B cell (primary cell): ENCODE measurements at regions of chr16 and their contacts with region 1.

Region 1: DNA sequence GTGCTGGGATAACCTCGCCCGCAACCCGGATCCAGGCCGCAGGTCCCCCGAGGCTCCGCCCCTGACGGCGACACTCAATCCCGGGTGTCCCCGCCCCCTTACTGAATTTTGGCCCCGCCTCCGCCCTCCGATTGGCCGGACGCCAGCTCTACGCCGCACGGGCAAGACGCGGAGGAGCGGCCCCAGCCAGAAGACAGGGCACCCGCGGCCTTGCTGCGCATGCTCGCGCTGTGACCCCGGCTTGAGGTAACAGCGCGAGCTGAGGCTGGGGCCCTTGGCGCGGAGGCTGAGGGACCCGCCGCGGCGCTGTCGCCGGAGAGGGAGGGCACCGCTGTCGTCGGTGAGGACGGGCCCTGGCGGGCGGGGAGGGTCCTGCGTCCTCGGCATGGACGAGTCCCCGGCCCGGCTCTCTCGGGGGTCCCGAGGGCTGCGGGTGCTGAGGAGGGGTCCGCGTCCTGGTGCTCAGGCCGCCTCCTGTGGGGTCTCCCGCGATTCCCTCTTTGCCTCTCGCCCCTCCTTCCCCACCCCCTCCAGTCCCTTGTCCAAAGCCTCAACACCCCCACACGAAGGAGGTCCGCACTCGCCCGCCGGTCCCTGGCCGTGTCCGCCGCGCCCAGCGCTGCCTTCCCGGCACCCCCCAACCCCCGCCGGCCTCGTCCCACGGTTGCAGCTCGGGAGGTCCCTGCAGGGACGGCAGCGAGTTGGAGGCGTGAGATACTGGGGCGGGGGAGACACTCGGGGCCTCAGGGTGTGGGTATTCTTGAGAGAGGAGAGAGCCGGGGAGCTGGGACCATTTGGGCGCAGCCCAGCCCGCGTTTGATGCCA is at the start of gene FLYWCH2:
- DNase-seq: peak; percentile 99
- ATAC-seq: peak; percentile 81
- H3K4me3 ChIP-seq: peak within 1 kb of the TSS; percentile 64 to 85 (median 77)
- H3K4me3 Mint-ChIP-seq: peak within 1 kb of the TSS; percentile 97
- H3K27ac ChIP-seq: peak within 1 kb of the TSS; percentile 86 to 89
- H3K27ac Mint-ChIP-seq: peak within 1 kb of the TSS; percentile 98
- H3K4me1 ChIP-seq: peaks cover 6 to 14% of the 10 kb centered on the region in 2 donors
- H3K4me1 Mint-ChIP-seq: peaks cover 12% of the 10 kb centered on the region
- H3K27me3 ChIP-seq: peaks cover 0 to 2% (median 0%) of the 10 kb centered on the region in 4 experiments
- H3K27me3 Mint-ChIP-seq: no peaks in the 10 kb centered on the region
- CTCF ChIP-seq: no peak
- total RNA-seq, gene FLYWCH2: 22.3 and 26.5 TPM in 2 replicates

Region 2: GRCh38 chr16:2459647-2460390 is 423.4 kb before region 1 on chr16 and contains the start of gene TEDC2:
- CTCF ChIA-PET with region 1: no interaction called
- POLR2A ChIA-PET with region 1: no interaction called
- intact Hi-C with region 1: no loop called
- DNase-seq: peak; percentile 96
- ATAC-seq: peak; percentile 100
- H3K4me3 ChIP-seq: peak within 1 kb of the TSS; percentile 17 to 84 (median 54)
- H3K4me3 Mint-ChIP-seq: peak within 1 kb of the TSS; percentile 94
- H3K27ac ChIP-seq: peak within 1 kb of the TSS in 1 of 2 donors; percentile 34
- H3K27ac Mint-ChIP-seq: peak within 1 kb of the TSS; percentile 68
- H3K4me1 ChIP-seq: peaks cover 10 to 16% of the 10 kb centered on the region in 2 donors
- H3K4me1 Mint-ChIP-seq: peaks cover 6% of the 10 kb centered on the region
- H3K27me3 ChIP-seq: no peaks in the 10 kb centered on the region
- H3K27me3 Mint-ChIP-seq: no peaks in the 10 kb centered on the region
- CTCF ChIP-seq: no peak
- total RNA-seq, gene TEDC2: 1.5 and 2.9 TPM in 2 replicates

Region 3: GRCh38 chr16:2673066-2673999 is 209.9 kb before region 1 on chr16:
- CTCF ChIA-PET with region 1: no interaction called
- POLR2A ChIA-PET with region 1: no interaction called
- intact Hi-C with region 1: loop called (anchors 5 kb)
- DNase-seq: peak; percentile 96
- ATAC-seq: peak; percentile 93
- H3K4me3 ChIP-seq: peak overlapping the region; percentile 70 to 87 (median 79)
- H3K4me3 Mint-ChIP-seq: peak overlapping the region; percentile 89
- H3K27ac ChIP-seq: peak overlapping the region; percentile 59 to 73
- H3K27ac Mint-ChIP-seq: peak overlapping the region; percentile 90
- H3K4me1 ChIP-seq: peaks cover 10 to 27% of the 10 kb centered on the region in 2 donors
- H3K4me1 Mint-ChIP-seq: peaks cover 26% of the 10 kb centered on the region
- H3K27me3 ChIP-seq: no peaks in the 10 kb centered on the region
- H3K27me3 Mint-ChIP-seq: no peaks in the 10 kb centered on the region
- CTCF ChIP-seq: no peak

Region 4: GRCh38 chr16:2867987-2868789 is 15.1 kb before region 1 on chr16:
- CTCF ChIA-PET with region 1: interaction called, 19 read pairs
- POLR2A ChIA-PET with region 1: interaction called, 4 read pairs
- intact Hi-C with region 1: loop called (anchors 1 kb)
- DNase-seq: peak; percentile 94
- ATAC-seq: peak; percentile 95
- H3K4me3 ChIP-seq: peak overlapping the region; percentile 47 to 83 (median 71)
- H3K4me3 Mint-ChIP-seq: peak overlapping the region; percentile 94
- H3K27ac ChIP-seq: peak overlapping the region; percentile 78 to 85
- H3K27ac Mint-ChIP-seq: peak overlapping the region; percentile 92
- H3K4me1 ChIP-seq: peaks cover 0 to 10% of the 10 kb centered on the region in 2 donors
- H3K4me1 Mint-ChIP-seq: peaks cover 9% of the 10 kb centered on the region
- H3K27me3 ChIP-seq: peaks cover 0 to 3% (median 0%) of the 10 kb centered on the region in 4 experiments
- H3K27me3 Mint-ChIP-seq: peaks cover 17% of the 10 kb centered on the region
- CTCF ChIP-seq: peak; percentile 97

Region 5: GRCh38 chr16:2905431-2906387 is 22.5 kb after region 1 on chr16:
- CTCF ChIA-PET with region 1: interaction called, 22 read pairs
- POLR2A ChIA-PET with region 1: interaction called, 18 read pairs
- intact Hi-C with region 1: loop called (anchors 1 kb)
- DNase-seq: peak; percentile 95
- ATAC-seq: peak; percentile 75
- H3K4me3 ChIP-seq: peak overlapping the region; percentile 21 to 85 (median 74)
- H3K4me3 Mint-ChIP-seq: peak overlapping the region; percentile 93
- H3K27ac ChIP-seq: peak overlapping the region in 1 of 2 donors; percentile 22
- H3K27ac Mint-ChIP-seq: peak overlapping the region; percentile 84
- H3K4me1 ChIP-seq: peaks cover 10 to 28% of the 10 kb centered on the region in 2 donors
- H3K4me1 Mint-ChIP-seq: peaks cover 33% of the 10 kb centered on the region
- H3K27me3 ChIP-seq: no peaks in the 10 kb centered on the region
- H3K27me3 Mint-ChIP-seq: no peaks in the 10 kb centered on the region
- CTCF ChIP-seq: no peak

Region 6: GRCh38 chr16:2919511-2920255 is 36.4 kb after region 1 on chr16:
- CTCF ChIA-PET with region 1: interaction called, 61 read pairs
- POLR2A ChIA-PET with region 1: interaction called, 3 read pairs
- intact Hi-C with region 1: no loop called
- DNase-seq: peak; percentile 80
- ATAC-seq: peak; percentile 69
- H3K4me3 ChIP-seq: no peak overlapping the region
- H3K4me3 Mint-ChIP-seq: no peak overlapping the region
- H3K27ac ChIP-seq: no peak overlapping the region
- H3K27ac Mint-ChIP-seq: no peak overlapping the region
- H3K4me1 ChIP-seq: peaks cover 0 to 3% of the 10 kb centered on the region in 2 donors
- H3K4me1 Mint-ChIP-seq: peaks cover 2% of the 10 kb centered on the region
- H3K27me3 ChIP-seq: no peaks in the 10 kb centered on the region
- H3K27me3 Mint-ChIP-seq: no peaks in the 10 kb centered on the region
- CTCF ChIP-seq: peak; percentile 96

Region 7: GRCh38 chr16:2980227-2981086 is 97.2 kb after region 1 on chr16 and contains the start of gene PKMYT1:
- CTCF ChIA-PET with region 1: no interaction called
- POLR2A ChIA-PET with region 1: no interaction called
- intact Hi-C with region 1: loop called (anchors 5 kb)
- DNase-seq: peak; percentile 96
- ATAC-seq: peak; percentile 93
- H3K4me3 ChIP-seq: peak within 1 kb of the TSS; percentile 57 to 96 (median 82)
- H3K4me3 Mint-ChIP-seq: peak within 1 kb of the TSS; percentile 81
- H3K27ac ChIP-seq: peak within 1 kb of the TSS; percentile 71 to 83
- H3K27ac Mint-ChIP-seq: peak within 1 kb of the TSS; percentile 84
- H3K4me1 ChIP-seq: peaks cover 18 to 39% of the 10 kb centered on the region in 2 donors
- H3K4me1 Mint-ChIP-seq: peaks cover 21% of the 10 kb centered on the region
- H3K27me3 ChIP-seq: peaks cover 0 to 8% (median 1%) of the 10 kb centered on the region in 4 experiments
- H3K27me3 Mint-ChIP-seq: no peaks in the 10 kb centered on the region
- CTCF ChIP-seq: no peak
- total RNA-seq, gene PKMYT1: 0.67 and 1.0 TPM in 2 replicates

Region 8: DNA sequence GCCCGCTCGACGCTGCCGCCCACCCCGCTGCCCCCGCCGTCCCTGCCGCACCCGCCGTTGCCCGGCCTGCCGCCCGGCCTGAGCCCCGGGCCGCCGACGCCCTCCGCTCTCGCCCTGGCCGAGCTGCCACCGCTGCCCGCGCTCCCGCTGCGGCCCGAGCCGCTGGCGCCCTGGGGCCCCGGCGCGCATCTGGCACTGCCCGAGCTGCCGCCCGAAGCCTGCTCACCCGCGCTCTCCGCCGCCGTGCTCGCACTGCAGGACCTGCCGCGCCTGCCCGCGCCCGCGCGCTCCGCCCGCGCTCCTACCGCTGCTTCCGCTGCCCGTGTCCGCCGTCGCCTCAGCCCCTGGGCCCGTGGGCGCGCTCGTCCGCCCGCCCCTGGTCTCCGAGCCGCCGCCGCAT is 121.1 kb after region 1 on chr16:
- CTCF ChIA-PET with region 1: no interaction called
- POLR2A ChIA-PET with region 1: no interaction called
- intact Hi-C with region 1: no loop called
- DNase-seq: no peak
- ATAC-seq: no peak
- H3K4me3 ChIP-seq: no peak overlapping the region
- H3K4me3 Mint-ChIP-seq: peak overlapping the region; percentile 71
- H3K27ac ChIP-seq: no peak overlapping the region
- H3K27ac Mint-ChIP-seq: no peak overlapping the region
- H3K4me1 ChIP-seq: peaks cover 25 to 32% of the 10 kb centered on the region in 2 donors
- H3K4me1 Mint-ChIP-seq: peaks cover 26% of the 10 kb centered on the region
- H3K27me3 ChIP-seq: peaks cover 0 to 10% (median 2%) of the 10 kb centered on the region in 4 experiments
- H3K27me3 Mint-ChIP-seq: peaks cover 9% of the 10 kb centered on the region
- CTCF ChIP-seq: no peak